ENCODE measurements at regions of chr1 and their contacts with region 1.

Region 1: DNA sequence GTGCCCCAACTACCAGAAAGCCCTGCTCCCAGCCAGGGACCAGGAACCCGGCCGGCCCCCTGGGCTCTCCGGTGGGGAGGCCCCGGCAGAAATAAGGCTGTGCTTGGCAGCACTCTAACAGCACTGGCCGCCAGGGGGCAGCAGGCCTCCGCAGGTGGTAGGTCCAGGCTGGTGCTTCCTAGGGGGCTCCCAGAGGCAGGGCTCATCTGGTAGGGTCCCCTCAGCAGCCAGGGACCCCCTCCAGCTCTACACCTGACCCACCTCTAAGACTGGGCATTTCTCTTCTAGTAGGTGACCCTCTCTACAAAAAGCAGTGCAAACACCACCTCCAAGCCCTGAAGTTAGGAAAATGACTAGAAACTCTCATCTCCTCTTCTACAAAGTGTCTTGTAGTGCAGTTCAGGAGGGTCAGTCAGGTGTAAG is 85.6 kb downstream of the STUM start:
- DNase-seq: peak; percentile 82
- H3K4me3 Mint-ChIP-seq: no peak overlapping the region
- H3K27ac Mint-ChIP-seq: no peak overlapping the region
- H3K4me1 Mint-ChIP-seq: peaks cover 20% of the 10 kb centered on the region
- H3K27me3 Mint-ChIP-seq: no peaks in the 10 kb centered on the region
- CTCF ChIP-seq: peak; percentile 100

Region 2: DNA sequence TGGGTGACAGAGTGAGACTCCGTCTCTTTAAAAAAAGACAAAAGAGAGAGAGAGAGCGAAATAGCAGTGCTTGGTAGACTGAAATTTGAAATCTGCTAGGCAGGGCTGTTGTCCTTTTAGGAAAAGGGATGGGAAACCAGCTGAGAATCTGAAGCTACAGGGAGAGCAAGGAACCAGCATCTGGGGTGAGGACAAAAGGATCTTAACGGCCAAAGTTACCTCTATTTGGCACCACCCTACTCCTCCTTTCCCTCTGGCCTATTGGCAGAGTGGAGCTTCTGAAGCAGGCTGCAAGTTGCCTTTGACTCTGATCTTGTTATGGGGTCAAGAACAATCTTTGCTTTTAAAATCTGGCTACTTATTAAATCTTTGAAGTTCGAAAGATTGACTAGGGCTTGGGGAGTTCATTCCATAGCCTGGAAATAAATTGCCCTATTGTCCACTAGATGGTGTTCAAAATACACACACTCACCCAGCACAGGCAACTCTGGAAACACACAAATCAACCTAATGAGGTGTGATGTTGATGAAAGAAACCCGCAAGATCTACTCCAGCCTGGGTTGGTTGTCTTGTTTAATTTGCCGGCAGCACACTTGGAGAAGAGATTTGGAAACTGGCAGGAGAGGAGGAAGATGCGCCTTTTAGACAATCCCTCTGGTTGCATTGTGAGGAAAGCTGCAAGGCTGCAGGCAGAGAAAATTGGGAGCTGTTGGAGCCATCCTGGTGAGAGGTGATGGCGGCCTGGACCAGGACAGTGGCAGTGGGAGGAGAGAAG is 209.8 kb before region 1 on chr1:
- CTCF ChIA-PET with region 1: interaction called, 11 read pairs
- POLR2A ChIA-PET with region 1: no interaction called
- intact Hi-C with region 1: no loop called
- DNase-seq: peak; percentile 77
- H3K4me3 Mint-ChIP-seq: no peak overlapping the region
- H3K27ac Mint-ChIP-seq: no peak overlapping the region
- H3K4me1 Mint-ChIP-seq: no peaks in the 10 kb centered on the region
- H3K27me3 Mint-ChIP-seq: no peaks in the 10 kb centered on the region
- CTCF ChIP-seq: peak; percentile 88

Region 3: DNA sequence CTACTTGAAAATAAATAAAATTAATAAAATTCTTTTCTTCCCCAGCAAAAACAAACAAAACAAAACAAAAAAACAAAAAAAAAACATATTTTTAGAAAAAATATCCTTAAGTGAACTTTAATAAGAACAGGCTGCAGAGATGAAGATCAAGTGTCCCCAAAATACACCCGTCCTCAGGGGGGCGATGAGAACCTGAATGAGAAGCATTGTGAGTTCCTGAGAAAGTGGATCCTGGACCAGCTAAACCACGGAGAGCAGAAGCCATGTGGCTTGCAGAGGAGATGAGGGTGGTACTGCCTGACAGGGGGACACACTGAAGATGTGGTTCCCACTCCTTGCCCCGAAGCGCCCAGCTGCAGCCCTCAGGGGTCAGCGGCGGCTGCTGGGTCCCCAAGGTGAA is 15.6 kb after region 1 on chr1:
- CTCF ChIA-PET with region 1: interaction called, 54 read pairs
- POLR2A ChIA-PET with region 1: no interaction called
- intact Hi-C with region 1: no loop called
- DNase-seq: peak; percentile 66
- H3K4me3 Mint-ChIP-seq: no peak overlapping the region
- H3K27ac Mint-ChIP-seq: no peak overlapping the region
- H3K4me1 Mint-ChIP-seq: no peaks in the 10 kb centered on the region
- H3K27me3 Mint-ChIP-seq: no peaks in the 10 kb centered on the region
- CTCF ChIP-seq: peak; percentile 44

Region 4: DNA sequence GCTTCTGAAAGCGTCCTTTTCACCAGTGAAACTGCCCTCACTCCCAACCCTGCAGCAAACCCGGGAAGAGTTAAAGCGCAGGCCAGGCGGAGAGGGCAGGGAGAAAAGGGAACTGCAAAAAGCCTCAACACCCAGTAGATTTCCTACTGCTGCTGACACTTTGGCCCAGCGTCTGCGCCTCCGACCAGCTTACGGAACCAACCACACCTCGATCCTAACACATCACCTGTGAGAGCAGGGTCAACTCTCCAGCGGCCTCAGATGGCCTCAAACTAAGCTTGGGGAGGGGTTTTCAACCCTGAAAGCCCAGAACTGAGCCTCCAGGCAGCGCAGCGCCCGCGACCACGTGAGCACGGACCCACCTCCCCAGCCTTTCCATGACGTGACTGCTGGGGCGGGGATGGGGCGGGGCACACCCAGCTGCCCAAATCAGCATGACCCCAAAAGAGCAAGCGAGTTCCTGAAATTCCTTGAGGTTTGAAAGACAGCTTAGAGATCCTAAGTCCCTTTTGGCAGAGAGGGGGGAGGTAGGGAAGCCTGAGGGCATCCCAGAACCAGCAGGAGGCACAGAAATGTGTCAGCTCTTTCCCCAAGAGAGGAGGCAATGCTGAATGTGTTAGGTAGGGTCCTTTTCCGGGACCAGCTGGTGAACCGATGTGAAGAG is 45.8 kb after region 1 on chr1:
- CTCF ChIA-PET with region 1: interaction called, 27 read pairs
- POLR2A ChIA-PET with region 1: interaction called, 3 read pairs
- intact Hi-C with region 1: no loop called
- DNase-seq: no peak
- H3K4me3 Mint-ChIP-seq: no peak overlapping the region
- H3K27ac Mint-ChIP-seq: no peak overlapping the region
- H3K4me1 Mint-ChIP-seq: peaks cover 24% of the 10 kb centered on the region
- H3K27me3 Mint-ChIP-seq: no peaks in the 10 kb centered on the region
- CTCF ChIP-seq: no peak

Region 5: DNA sequence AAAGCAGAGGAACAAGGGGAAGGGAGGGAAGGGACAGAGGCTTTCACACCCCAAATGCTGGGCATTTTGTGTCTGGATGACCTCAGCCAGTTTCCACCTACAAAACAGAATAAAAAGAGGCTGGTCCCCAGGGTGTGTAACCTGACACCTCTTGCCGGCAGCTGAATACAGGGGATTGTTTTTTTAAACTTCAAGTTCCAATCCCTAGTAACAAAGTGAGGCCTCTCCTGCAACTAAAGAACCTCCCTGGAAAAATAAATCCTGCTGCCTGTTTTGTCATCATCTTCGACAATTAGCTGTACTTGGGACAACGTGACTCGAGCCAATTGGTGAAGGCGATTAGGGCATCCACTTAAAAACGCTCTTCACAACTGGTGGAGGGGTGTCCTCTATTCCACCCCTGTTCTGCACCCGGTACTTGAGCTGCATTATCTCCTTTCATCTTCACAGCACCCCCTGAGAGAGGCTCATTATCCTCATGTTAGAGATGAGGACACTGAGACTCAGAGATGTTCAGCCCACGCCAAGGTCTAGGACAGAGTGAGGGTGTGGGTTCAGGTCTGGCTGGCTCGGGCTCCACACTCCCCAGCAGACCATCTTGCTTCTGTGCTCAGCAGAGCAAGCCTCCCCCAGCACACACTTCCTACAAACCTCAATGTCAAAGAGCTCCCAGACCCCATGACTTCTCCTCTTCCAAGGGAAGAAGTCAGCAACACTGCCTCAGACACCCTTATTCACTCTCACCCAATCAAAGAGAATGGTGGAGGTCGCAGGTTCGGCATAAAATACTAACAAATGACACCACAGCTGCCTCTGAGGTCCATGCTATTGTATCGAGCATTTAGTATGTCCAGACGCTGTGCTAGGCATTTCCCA is 89.7 kb after region 1 on chr1:
- CTCF ChIA-PET with region 1: interaction called, 16 read pairs
- POLR2A ChIA-PET with region 1: no interaction called
- intact Hi-C with region 1: no loop called
- DNase-seq: peak; percentile 79
- H3K4me3 Mint-ChIP-seq: no peak overlapping the region
- H3K27ac Mint-ChIP-seq: no peak overlapping the region
- H3K4me1 Mint-ChIP-seq: peaks cover 20% of the 10 kb centered on the region
- H3K27me3 Mint-ChIP-seq: no peaks in the 10 kb centered on the region
- CTCF ChIP-seq: no peak

Region 6: GRCh38 chr1:226814751-226815496 is 180.7 kb after region 1 on chr1:
- CTCF ChIA-PET with region 1: interaction called, 342 read pairs
- POLR2A ChIA-PET with region 1: interaction called, 9 read pairs
- intact Hi-C with region 1: no loop called
- DNase-seq: peak; percentile 100
- H3K4me3 Mint-ChIP-seq: no peak overlapping the region
- H3K27ac Mint-ChIP-seq: peak overlapping the region; percentile 89
- H3K4me1 Mint-ChIP-seq: peaks cover 18% of the 10 kb centered on the region
- H3K27me3 Mint-ChIP-seq: no peaks in the 10 kb centered on the region
- CTCF ChIP-seq: no peak

Region 7: DNA sequence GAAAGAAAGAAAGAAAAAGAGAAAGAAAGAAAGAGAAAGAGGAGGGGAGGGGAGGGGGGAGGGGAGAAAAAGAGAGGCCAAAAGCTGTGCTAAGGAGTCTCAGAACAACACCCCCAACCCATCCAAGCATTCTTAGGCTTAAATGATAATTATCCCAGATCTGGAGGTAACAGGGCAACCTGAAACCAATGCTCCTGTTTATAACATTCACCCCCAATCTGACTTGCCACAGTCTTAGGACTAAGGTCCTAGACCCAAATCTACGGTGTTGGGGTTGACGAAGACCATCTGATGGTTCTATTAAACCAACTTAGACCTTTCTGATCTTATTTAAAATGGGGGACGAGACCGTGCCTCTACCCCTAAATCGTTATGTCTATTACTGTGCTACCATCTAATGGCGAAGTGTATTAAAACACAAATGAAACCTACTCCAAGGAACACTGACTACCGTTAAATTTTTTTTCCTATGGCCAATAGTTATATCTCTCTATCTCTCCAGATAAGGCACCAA is 803.4 kb after region 1 on chr1:
- CTCF ChIA-PET with region 1: interaction called, 6 read pairs
- POLR2A ChIA-PET with region 1: no interaction called
- intact Hi-C with region 1: loop called (anchors 1 kb)
- DNase-seq: peak; percentile 83
- H3K4me3 Mint-ChIP-seq: peak overlapping the region; percentile 58
- H3K27ac Mint-ChIP-seq: peak overlapping the region; percentile 53
- H3K4me1 Mint-ChIP-seq: peaks cover 16% of the 10 kb centered on the region
- H3K27me3 Mint-ChIP-seq: no peaks in the 10 kb centered on the region
- CTCF ChIP-seq: peak; percentile 80